CD14-positive monocyte (primary cell): ENCODE measurements at regions of chr11 and their contacts with region 1.

Region 1: DNA sequence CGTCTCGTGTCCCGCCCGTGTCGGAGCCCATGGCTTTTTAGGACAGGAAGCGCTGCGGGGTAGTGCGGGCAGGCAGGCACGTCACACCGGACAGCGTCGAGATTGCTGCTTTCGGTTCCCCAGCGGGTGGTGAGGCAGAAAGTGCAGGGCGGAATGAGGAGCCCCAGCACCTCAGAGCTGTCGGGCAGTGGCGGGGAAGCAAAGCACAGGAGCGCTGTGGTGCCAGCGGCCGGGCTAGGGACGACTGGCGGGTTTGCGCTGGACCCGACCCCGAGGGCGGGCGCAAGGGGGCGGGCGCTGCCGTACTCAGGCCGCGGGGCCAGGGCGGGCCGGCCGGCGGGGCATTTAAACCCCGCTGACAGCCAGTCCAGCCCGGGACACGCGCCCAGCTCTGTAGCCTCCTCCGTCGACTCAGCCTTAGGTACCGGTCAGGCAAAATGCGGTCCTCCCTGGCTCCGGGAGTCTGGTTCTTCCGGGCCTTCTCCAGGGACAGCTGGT is at the start of gene SLC37A2:
- DNase-seq: peak; percentile 96 to 98 (median 97)
- H3K4me3 ChIP-seq: peak within 1 kb of the TSS; percentile 60 to 80 (median 75)
- H3K4me3 Mint-ChIP-seq: peak within 1 kb of the TSS; percentile 86 to 92
- H3K27ac ChIP-seq: peak within 1 kb of the TSS; percentile 93
- H3K27ac Mint-ChIP-seq: peak within 1 kb of the TSS; percentile 89 to 97 (median 95)
- H3K4me1 ChIP-seq: peaks cover 40 to 52% of the 10 kb centered on the region in 2 donors
- H3K4me1 Mint-ChIP-seq: peaks cover 47% of the 10 kb centered on the region
- H3K27me3 ChIP-seq: no peaks in the 10 kb centered on the region
- H3K27me3 Mint-ChIP-seq: peaks cover 1 to 5% (median 5%) of the 10 kb centered on the region in 3 donors
- CTCF ChIP-seq: peak; percentile 26
- polyA plus RNA-seq, gene SLC37A2: 70.8 to 81.5 (median 78.9) TPM

Region 2: DNA sequence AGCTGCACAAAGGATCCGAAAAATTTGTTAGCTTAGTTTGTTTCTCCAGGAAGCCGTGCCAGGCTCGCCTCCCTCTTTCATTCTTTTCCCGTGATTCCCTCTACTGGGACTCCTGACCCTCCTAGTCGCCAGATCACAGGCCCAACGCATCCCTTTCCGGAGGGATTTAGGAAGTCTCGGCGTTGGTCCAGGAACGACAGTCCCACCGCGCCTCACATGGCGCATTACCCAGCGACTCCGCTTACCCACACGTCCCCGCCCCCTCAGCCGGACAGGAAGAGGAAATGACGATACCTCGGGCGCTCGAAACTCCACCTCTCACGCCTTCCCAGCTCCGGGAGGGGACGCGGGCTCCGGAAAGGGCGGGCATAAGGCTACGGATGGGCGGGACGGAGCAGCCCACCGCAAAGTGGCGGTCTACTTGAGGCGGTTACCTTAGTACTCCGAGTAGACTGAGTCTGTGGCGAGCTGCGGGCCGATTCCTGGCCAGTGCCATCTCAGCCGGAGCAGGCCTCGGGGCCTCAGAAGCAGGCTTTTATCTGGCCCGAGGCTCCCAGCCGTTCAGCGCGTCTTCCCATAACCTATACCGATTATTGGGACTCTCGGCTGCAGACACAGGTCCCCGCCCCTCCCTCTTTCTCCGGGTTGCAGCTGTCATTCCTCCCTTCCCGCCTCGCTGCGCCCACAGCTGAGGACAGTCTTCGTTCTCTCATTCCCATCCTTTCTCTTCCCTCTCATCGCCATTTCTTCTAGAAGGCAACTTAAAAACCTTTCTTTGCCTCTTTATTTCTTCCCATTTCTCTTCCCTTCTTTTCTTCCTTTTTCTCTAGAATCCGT is 109.0 kb before region 1 on chr11 and contains the start of gene CCDC15:
- intact Hi-C with region 1: loop called (anchors 5 to 10 kb)
- DNase-seq: peak; percentile 90 to 92 (median 92)
- H3K4me3 ChIP-seq: peak within 1 kb of the TSS; percentile 88 to 91 (median 90)
- H3K4me3 Mint-ChIP-seq: no peak within 1 kb of the TSS
- H3K27ac ChIP-seq: peak within 1 kb of the TSS; percentile 46 to 85
- H3K27ac Mint-ChIP-seq: no peak within 1 kb of the TSS
- H3K4me1 ChIP-seq: peaks cover 11 to 18% of the 10 kb centered on the region in 2 donors
- H3K4me1 Mint-ChIP-seq: no peaks in the 10 kb centered on the region
- H3K27me3 ChIP-seq: peaks cover 3 to 7% of the 10 kb centered on the region in 2 donors
- H3K27me3 Mint-ChIP-seq: peaks cover 0 to 4% (median 2%) of the 10 kb centered on the region in 3 donors
- CTCF ChIP-seq: no peak
- polyA plus RNA-seq, gene CCDC15: 0.24 to 0.32 (median 0.28) TPM

Region 3: DNA sequence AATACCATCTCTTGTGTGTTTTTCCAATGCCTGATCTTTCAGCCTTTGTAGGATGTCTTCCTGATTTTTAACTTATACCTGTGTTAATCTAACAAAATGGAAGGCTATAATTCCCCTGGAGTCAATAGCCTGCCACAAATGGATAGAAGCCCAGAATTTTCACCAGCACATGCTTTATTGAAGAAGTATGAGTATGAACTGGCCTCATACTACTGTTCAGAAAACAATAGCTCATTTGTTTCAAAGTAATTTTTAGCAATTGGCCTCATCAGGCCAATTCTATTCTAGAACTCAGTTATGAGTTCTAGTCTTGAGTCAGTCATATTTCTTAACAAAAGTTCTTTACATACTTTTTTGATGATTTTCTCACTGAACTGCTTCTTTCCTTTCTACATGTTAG is 40.4 kb before region 1 on chr11:
- intact Hi-C with region 1: no loop called
- DNase-seq: no peak
- H3K4me3 ChIP-seq: no peak overlapping the region
- H3K4me3 Mint-ChIP-seq: no peak overlapping the region
- H3K27ac ChIP-seq: no peak overlapping the region
- H3K27ac Mint-ChIP-seq: no peak overlapping the region
- H3K4me1 ChIP-seq: no peaks in the 10 kb centered on the region
- H3K4me1 Mint-ChIP-seq: peaks cover 2% of the 10 kb centered on the region
- H3K27me3 ChIP-seq: no peaks in the 10 kb centered on the region
- H3K27me3 Mint-ChIP-seq: no peaks in the 10 kb centered on the region
- CTCF ChIP-seq: no peak

Region 4: DNA sequence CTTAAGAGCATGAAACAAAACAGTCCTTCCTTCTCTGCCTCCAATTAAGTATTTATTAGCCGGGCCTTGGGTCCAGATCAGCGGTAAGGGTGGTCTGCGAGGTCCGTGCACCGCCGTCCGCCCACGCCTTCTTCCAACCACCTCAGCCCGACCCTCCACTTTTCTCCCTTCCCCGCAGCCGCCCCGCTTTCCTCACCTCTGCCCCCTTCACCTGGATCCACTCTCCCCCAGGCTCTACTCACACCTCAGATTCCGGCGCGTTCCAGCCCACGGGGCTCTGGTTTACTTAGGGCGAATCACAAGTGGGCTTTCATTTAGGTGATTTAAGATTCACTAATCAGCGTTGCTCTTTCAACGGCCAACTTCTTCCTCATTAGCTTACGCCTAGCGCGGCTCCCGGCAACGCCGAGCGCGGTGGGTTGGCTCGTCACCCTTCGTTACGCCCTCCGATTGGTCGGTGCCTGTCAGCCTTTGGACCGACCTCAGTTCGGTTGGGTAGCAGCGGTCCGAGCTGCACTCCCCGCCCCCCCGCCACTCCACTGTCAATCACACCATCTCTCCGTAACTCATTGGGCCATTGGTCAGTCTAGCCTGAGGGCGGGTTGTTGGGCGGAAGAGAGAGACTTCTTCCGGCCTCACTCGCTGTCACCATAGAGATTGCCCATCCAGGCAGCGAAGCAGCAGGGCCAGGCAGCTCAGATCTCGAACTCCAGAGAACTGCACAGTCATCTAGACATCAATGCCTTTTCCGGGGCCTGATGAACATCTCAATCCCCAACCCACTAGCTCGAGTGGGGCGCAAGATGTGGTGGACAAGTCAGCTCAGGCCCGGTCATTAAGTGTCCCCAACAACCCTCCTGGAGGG is 48.6 kb after region 1 on chr11 and contains the start of gene TMEM218:
- intact Hi-C with region 1: loop called in 1 of 2 experiments (anchors 5 kb)
- DNase-seq: peak; percentile 99 to 100 (median 100)
- H3K4me3 ChIP-seq: peak within 1 kb of the TSS; percentile 86 to 93 (median 90)
- H3K4me3 Mint-ChIP-seq: peak within 1 kb of the TSS; percentile 86 to 96
- H3K27ac ChIP-seq: peak within 1 kb of the TSS; percentile 86 to 88
- H3K27ac Mint-ChIP-seq: peak within 1 kb of the TSS; percentile 89 to 99 (median 96)
- H3K4me1 ChIP-seq: peaks cover 17 to 19% of the 10 kb centered on the region in 2 donors
- H3K4me1 Mint-ChIP-seq: peaks cover 17% of the 10 kb centered on the region
- H3K27me3 ChIP-seq: no peaks in the 10 kb centered on the region
- H3K27me3 Mint-ChIP-seq: peaks cover 0 to 5% (median 3%) of the 10 kb centered on the region in 3 donors
- CTCF ChIP-seq: no peak
- polyA plus RNA-seq, gene TMEM218: 40.3 to 57.7 (median 55.7) TPM